Spleen (tissue), 13 donors: ENCODE measurements at regions of chr9 and their contacts with region 1.

Region 1: GRCh38 chr9:114082017-114082762 is 4.1 kb upstream of the AMBP start:
- DNase-seq: peak; percentile 88
- H3K4me3 ChIP-seq: no peak overlapping the region
- H3K27ac ChIP-seq: no peak overlapping the region
- H3K4me1 ChIP-seq: peaks cover 0 to 4% (median 0%) of the 10 kb centered on the region in 6 donors
- H3K27me3 ChIP-seq: peaks cover 0 to 17% (median 0%) of the 10 kb centered on the region in 7 donors
- CTCF ChIP-seq: peak; percentile 52 to 91 (median 85)
- POLR2A ChIP-seq: no peak

Region 2: GRCh38 chr9:114291064-114291474 is 208.9 kb after region 1 on chr9:
- intact Hi-C with region 1: loop called (anchors 10 kb)
- DNase-seq: peak; percentile 91
- H3K4me3 ChIP-seq: no peak overlapping the region
- H3K27ac ChIP-seq: no peak overlapping the region
- H3K4me1 ChIP-seq: peaks cover 0 to 15% (median 4%) of the 10 kb centered on the region in 6 donors
- H3K27me3 ChIP-seq: peaks cover 0 to 12% (median 0%) of the 10 kb centered on the region in 7 donors
- CTCF ChIP-seq: peak; percentile 78 to 96 (median 93)
- POLR2A ChIP-seq: no peak